B cell (primary cell): ENCODE measurements at regions of chr17 and their contacts with region 1.

Region 1: DNA sequence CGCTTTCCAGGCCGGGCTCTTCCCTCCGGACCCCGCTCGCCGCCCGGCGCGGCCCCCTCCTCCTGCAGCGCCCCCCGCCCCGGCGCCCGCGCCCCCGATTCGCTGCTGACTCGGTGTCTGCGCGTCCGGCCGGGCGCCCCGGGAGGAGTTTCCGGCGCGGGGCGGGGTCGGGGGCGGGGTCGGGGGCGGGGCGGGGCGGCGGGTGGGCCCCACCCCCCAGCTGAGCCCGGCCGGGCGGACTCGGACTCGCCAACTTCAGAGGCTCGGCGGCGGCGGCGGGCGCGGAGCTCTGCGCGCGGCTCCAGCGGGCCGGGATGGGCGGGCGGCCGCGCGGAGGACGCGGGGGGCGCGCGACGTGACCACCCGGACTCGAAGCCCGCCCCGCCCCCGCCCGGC is at the start of gene METRNL:
- DNase-seq: peak; percentile 76
- ATAC-seq: peak; percentile 53
- H3K4me3 ChIP-seq: peak within 1 kb of the TSS in 4 of 5 experiments; percentile 17 to 71 (median 54)
- H3K4me3 Mint-ChIP-seq: peak within 1 kb of the TSS; percentile 59
- H3K27ac ChIP-seq: no peak within 1 kb of the TSS
- H3K27ac Mint-ChIP-seq: peak within 1 kb of the TSS; percentile 32
- H3K4me1 ChIP-seq: peaks cover 21 to 24% of the 10 kb centered on the region in 2 donors
- H3K4me1 Mint-ChIP-seq: peaks cover 30% of the 10 kb centered on the region
- H3K27me3 ChIP-seq: peaks cover 0 to 13% (median 5%) of the 10 kb centered on the region in 4 experiments
- H3K27me3 Mint-ChIP-seq: peaks cover 13% of the 10 kb centered on the region
- CTCF ChIP-seq: no peak
- total RNA-seq, gene METRNL: 18.4 and 19.7 TPM in 2 replicates

Region 2: DNA sequence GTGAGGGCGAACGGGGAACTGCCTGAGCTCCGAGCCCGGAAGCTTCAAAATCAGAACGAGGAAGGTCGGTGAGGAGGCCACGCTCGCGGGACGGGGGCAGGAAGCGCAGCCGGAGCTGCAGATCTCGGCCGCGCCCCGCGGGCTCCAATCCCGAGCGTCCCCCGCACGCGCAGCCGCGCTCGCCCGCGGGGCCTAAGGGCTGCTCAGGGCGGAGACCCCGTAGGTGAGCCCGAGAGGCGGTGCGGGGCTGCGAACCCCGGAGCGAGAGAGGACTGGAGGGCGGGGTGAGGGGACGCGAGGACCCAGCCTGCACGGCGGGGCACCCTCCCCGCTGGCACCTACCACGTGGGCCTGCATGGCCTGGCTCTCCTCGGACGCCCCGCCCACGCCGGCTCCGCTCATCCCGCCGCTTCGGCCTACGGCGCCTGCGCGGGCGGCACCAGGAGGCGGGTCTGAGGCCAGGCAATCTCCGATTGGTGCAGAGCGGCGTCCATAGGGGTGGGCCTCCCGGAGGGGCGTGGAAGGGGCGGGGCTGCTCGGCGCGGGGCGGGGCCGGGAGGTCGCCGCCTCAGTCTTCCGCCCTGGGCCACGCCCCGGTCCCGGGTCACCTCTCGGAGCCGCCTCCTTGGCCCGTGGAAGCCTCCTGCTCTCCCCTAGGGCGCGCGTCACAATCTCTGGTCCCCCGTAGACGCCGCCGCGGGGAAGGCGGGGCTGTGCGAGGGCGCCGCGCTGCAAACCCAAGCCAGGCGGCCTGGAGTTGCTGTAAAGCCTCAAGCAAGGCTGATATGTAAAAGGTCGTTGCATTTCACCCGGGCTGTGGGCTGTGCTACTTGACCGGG is 27.7 kb before region 1 on chr17:
- CTCF ChIA-PET with region 1: interaction called, 3 read pairs
- POLR2A ChIA-PET with region 1: interaction called, 10 read pairs
- intact Hi-C with region 1: loop called (anchors 1 kb)
- DNase-seq: peak; percentile 98
- ATAC-seq: peak; percentile 90
- H3K4me3 ChIP-seq: peak overlapping the region in 4 of 5 experiments; percentile 45 to 76 (median 62)
- H3K4me3 Mint-ChIP-seq: peak overlapping the region; percentile 88
- H3K27ac ChIP-seq: peak overlapping the region; percentile 68 to 69
- H3K27ac Mint-ChIP-seq: peak overlapping the region; percentile 91
- H3K4me1 ChIP-seq: peaks cover 11 to 29% of the 10 kb centered on the region in 2 donors
- H3K4me1 Mint-ChIP-seq: peaks cover 30% of the 10 kb centered on the region
- H3K27me3 ChIP-seq: no peaks in the 10 kb centered on the region
- H3K27me3 Mint-ChIP-seq: no peaks in the 10 kb centered on the region
- CTCF ChIP-seq: no peak

Region 3: DNA sequence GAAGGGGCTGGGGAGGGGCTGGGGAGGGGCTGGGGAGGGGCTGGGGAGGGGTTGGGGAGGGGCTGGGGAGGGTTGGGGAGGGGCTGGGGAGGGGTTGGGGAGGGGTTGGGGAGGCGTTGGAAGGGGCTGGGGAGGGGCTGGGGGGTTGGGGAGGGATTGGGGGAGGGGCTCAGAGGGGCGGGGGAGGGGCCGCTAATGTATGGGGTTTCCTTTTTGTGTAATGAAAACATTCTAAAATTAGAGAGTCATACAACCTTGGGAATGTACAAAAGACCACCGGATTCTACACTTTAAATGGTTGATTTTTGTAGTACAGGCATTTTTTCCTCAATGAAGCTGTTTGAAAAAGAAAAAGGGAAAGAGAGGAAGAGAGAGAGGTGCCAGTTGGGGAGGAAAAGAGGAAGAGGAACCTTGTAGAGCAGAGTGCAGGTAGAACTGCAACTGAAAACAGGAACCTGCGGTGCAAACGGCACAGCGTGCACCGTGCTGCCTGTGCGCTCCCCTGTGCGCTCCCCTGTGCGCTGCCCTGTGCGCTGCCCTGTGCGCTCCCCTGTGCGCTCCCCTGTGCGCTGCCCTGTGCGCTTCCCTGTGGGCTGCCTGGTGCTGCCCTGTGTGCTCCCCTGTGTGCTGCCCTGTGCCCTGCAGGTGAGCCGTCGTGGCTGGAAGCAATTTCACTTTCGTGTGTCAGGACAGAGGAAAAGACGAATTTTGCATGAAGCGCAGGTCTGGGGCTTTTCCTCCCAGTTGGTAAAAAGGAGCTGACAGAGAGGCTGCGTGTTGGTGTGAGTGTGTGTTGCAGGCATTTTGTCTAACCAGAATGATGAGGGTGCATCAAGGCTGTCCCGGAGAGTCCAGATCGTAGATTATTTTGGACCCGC is 40.9 kb after region 1 on chr17:
- CTCF ChIA-PET with region 1: no interaction called
- POLR2A ChIA-PET with region 1: no interaction called
- intact Hi-C with region 1: loop called (anchors 1 kb)
- DNase-seq: peak; percentile 91
- ATAC-seq: peak; percentile 99
- H3K4me3 ChIP-seq: peak overlapping the region in 3 of 5 experiments; percentile 25 to 35 (median 29)
- H3K4me3 Mint-ChIP-seq: peak overlapping the region; percentile 78
- H3K27ac ChIP-seq: no peak overlapping the region
- H3K27ac Mint-ChIP-seq: peak overlapping the region; percentile 79
- H3K4me1 ChIP-seq: peaks cover 21 to 28% of the 10 kb centered on the region in 2 donors
- H3K4me1 Mint-ChIP-seq: peaks cover 37% of the 10 kb centered on the region
- H3K27me3 ChIP-seq: peaks cover 0 to 43% (median 11%) of the 10 kb centered on the region in 4 experiments
- H3K27me3 Mint-ChIP-seq: peaks cover 21% of the 10 kb centered on the region
- CTCF ChIP-seq: no peak